ENCODE measurements at regions of chr15 and their contacts with region 1.

Region 1: GRCh38 chr15:64836023-64836536 is 5.6 kb upstream of the PLEKHO2 start:
- DNase-seq: no peak
- ATAC-seq: no peak
- H3K4me3 Mint-ChIP-seq: peak overlapping the region; percentile 58 to 80 (median 72)
- H3K27ac Mint-ChIP-seq: peak overlapping the region; percentile 24 to 90 (median 86)
- H3K4me1 Mint-ChIP-seq: peaks cover 34 to 55% (median 53%) of the 10 kb centered on the region in 4 donors
- H3K27me3 Mint-ChIP-seq: no peaks in the 10 kb centered on the region

Region 2: GRCh38 chr15:64515196-64515595 is 320.9 kb before region 1 on chr15:
- POLR2A ChIA-PET with region 1: no interaction called
- DNase-seq: no peak
- ATAC-seq: no peak
- H3K4me3 Mint-ChIP-seq: peak overlapping the region in 6 of 10 donors; percentile 34 to 86 (median 68)
- H3K27ac Mint-ChIP-seq: peak overlapping the region; percentile 29 to 96 (median 93)
- H3K4me1 Mint-ChIP-seq: peaks cover 31 to 80% (median 75%) of the 10 kb centered on the region in 4 donors
- H3K27me3 Mint-ChIP-seq: no peaks in the 10 kb centered on the region

Region 3: DNA sequence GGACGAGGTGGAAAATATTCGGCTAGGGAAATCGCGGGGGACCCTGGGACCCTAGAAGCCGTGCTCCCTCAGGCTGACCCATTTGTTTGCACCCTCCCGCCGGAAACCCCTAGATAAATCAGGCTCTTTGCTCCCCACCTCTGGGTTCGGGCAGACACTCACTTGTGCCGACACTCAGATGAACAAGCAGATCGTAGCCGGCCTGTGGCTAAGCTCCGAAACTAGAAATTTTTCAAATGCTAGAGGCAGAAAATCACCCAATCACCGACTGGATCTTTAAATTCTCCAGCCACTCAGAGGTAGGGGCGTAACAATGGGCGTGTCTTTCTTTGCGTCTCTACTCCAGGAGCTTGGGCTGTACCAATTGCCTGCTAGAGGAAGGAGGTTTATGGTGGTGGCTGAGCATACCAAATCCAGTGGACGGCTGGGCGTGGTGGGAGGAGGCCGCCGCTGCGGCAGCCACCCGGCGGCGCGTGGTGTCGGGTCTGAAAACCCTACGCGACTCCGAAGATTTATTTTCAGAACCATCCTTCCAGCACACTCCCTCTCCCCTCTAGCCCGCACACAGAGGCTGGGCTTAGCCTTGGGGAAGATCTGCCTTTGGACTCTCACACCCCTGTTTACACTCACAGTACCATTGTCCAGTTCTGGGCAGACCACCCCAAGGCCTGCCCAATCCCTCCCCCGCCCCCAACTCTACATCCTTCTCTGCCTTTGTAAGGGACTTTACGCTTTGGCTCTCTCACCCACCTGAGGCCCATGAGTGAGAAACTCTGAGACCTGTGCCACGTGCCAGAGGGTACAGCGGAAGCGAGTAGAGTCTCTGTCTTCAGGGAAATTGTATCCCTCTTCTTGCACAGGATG is 10.4 kb before region 1 on chr15 and contains the start of gene PIF1:
- POLR2A ChIA-PET with region 1: interaction called, 15 read pairs
- DNase-seq: peak; percentile 57 to 94 (median 86)
- ATAC-seq: peak; percentile 95 to 98
- H3K4me3 Mint-ChIP-seq: peak within 1 kb of the TSS; percentile 82 to 94 (median 91)
- H3K27ac Mint-ChIP-seq: peak within 1 kb of the TSS in 9 of 10 donors; percentile 57 to 85 (median 72)
- H3K4me1 Mint-ChIP-seq: peaks cover 18 to 34% (median 30%) of the 10 kb centered on the region in 4 donors
- H3K27me3 Mint-ChIP-seq: peaks cover 3 to 32% (median 13%) of the 10 kb centered on the region in 5 donors
- polyA plus RNA-seq, gene PIF1: 0.15 to 0.68 TPM in 2 of 3 donors, not detected in the other

Region 4: GRCh38 chr15:64905119-64905831 is 69.2 kb after region 1 on chr15:
- POLR2A ChIA-PET with region 1: interaction called, 12 read pairs
- DNase-seq: peak; percentile 60 to 86 (median 76)
- ATAC-seq: peak; percentile 68 to 89
- H3K4me3 Mint-ChIP-seq: peak overlapping the region; percentile 30 to 84 (median 74)
- H3K27ac Mint-ChIP-seq: peak overlapping the region in 6 of 10 donors; percentile 33 to 95 (median 42)
- H3K4me1 Mint-ChIP-seq: peaks cover 18 to 45% (median 36%) of the 10 kb centered on the region in 4 donors
- H3K27me3 Mint-ChIP-seq: peaks cover 0 to 11% (median 0%) of the 10 kb centered on the region in 5 donors

Measured in naive thymus-derived CD8-positive, alpha-beta T cell (primary cell).